ENCODE measurements at regions of chr9 and their contacts with region 1.

Region 1: DNA sequence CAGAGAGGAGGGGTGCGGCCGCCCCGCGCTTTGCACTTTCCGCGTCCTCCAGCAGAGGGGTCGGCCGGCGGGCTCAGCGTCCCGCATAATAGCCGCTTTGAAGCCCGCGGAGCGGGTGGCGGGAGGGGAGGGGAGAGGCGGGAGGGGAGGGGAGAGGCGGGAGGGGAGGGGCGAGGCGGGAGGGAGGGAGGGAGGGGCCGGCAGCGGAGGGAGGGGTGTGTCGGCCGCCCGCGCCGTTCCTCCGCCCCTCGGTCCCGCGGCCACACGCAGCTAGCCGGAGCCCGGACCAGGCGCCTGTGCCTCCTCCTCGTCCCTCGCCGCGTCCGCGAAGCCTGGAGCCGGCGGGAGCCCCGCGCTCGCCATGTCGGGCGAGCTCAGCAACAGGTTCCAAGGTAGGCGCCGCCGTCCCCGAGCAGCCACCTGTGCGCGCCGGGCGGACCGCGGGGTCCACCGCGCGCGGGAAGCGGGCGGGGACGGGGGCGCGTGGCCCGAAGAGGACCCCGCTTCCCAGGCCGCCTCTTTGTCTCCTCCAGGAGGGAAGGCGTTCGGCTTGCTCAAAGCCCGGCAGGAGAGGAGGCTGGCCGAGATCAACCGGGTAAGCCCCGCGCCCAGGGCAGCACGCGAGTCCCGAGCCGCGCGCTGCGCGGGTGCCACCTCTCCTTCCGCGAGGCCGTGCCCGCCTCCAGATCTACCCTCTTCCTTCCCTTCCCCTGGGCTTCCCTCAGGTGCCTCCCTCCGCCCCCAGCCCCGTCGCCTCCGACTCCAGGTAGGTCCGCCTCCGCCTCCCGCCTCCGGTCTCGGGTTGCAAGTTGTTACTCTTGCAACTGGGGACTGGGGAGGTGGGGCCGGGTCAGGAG is at the start of gene AIF1L:
- DNase-seq: peak; percentile 68 to 91
- H3K4me3 ChIP-seq: peak within 1 kb of the TSS; percentile 85 to 92 (median 88)
- H3K27ac ChIP-seq: peak within 1 kb of the TSS; percentile 86
- H3K4me1 ChIP-seq: peaks cover 0 to 38% (median 29%) of the 10 kb centered on the region in 4 experiments; a peak in 6 of 7 replicates
- H3K27me3 ChIP-seq: no peaks in the 10 kb centered on the region; a peak in 1 of 7 replicates
- CTCF ChIP-seq: peak in 2 of 3 experiments; percentile 31 to 41; a peak in 3 of 4 replicates
- EP300 ChIP-seq: no peak
- POLR2A ChIP-seq: peak in 1 of 2 experiments; percentile 89; a peak in 2 of 3 replicates
- RAD21 ChIP-seq: peak; percentile 17 to 41; a peak in 3 of 4 replicates
- total RNA-seq, gene AIF1L: 149 and 153 TPM in 2 replicates

Region 2: GRCh38 chr9:130927338-130927737 is 169.2 kb before region 1 on chr9:
- CTCF ChIA-PET with region 1: no interaction called
- POLR2A ChIA-PET with region 1: no interaction called
- DNase-seq: no peak
- H3K4me3 ChIP-seq: no peak overlapping the region
- H3K27ac ChIP-seq: no peak overlapping the region
- H3K4me1 ChIP-seq: peaks cover 0 to 13% (median 3%) of the 10 kb centered on the region in 4 experiments; a peak in 6 of 7 replicates
- H3K27me3 ChIP-seq: no peaks in the 10 kb centered on the region
- CTCF ChIP-seq: no peak
- EP300 ChIP-seq: no peak
- POLR2A ChIP-seq: no peak
- RAD21 ChIP-seq: no peak

Region 3: GRCh38 chr9:130940693-130941576 is 155.6 kb before region 1 on chr9:
- CTCF ChIA-PET with region 1: no interaction called
- POLR2A ChIA-PET with region 1: no interaction called
- DNase-seq: peak; percentile 85 to 99
- H3K4me3 ChIP-seq: peak overlapping the region in 1 of 4 experiments; percentile 96; a peak in 3 of 8 replicates
- H3K27ac ChIP-seq: no peak overlapping the region
- H3K4me1 ChIP-seq: peaks cover 8 to 34% (median 15%) of the 10 kb centered on the region in 4 experiments
- H3K27me3 ChIP-seq: peaks cover 18 to 44% (median 32%) of the 10 kb centered on the region in 4 experiments
- CTCF ChIP-seq: peak in 2 of 3 experiments; percentile 90 to 97; a peak in 3 of 4 replicates
- EP300 ChIP-seq: no peak
- POLR2A ChIP-seq: no peak
- RAD21 ChIP-seq: peak; percentile 87 to 88

Region 4: DNA sequence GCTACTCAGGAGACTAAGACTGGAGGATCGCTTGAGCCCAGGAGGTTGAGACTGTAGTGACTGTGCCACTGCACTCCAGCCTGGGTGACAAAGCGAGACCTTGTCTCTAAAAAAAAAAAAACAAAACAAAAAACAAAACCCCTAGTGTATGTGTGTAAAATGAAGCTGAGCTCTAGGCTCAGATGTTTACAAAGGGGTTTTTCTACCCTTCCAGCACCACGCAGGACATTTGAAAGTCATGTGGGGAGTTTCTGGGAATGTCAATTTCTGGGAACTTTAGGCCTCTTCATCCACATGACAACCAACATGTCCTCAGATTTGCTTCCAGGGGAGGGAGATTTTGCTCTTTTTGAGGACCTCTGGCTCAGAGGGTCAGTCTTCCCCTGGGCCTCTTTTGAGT is 42.6 kb before region 1 on chr9:
- CTCF ChIA-PET with region 1: interaction called, 14 read pairs
- POLR2A ChIA-PET with region 1: interaction called, 4 read pairs
- DNase-seq: no peak
- H3K4me3 ChIP-seq: no peak overlapping the region
- H3K27ac ChIP-seq: no peak overlapping the region
- H3K4me1 ChIP-seq: no peaks in the 10 kb centered on the region
- H3K27me3 ChIP-seq: no peaks in the 10 kb centered on the region
- CTCF ChIP-seq: no peak
- EP300 ChIP-seq: no peak
- POLR2A ChIP-seq: no peak
- RAD21 ChIP-seq: no peak

Region 5: GRCh38 chr9:131076347-131077195 is 19.9 kb before region 1 on chr9:
- CTCF ChIA-PET with region 1: interaction called, 24 read pairs
- POLR2A ChIA-PET with region 1: interaction called, 16 read pairs
- DNase-seq: no peak
- H3K4me3 ChIP-seq: no peak overlapping the region
- H3K27ac ChIP-seq: no peak overlapping the region
- H3K4me1 ChIP-seq: no peaks in the 10 kb centered on the region; a peak in 1 of 7 replicates
- H3K27me3 ChIP-seq: no peaks in the 10 kb centered on the region
- CTCF ChIP-seq: no peak
- EP300 ChIP-seq: no peak
- POLR2A ChIP-seq: no peak
- RAD21 ChIP-seq: no peak

Region 6: DNA sequence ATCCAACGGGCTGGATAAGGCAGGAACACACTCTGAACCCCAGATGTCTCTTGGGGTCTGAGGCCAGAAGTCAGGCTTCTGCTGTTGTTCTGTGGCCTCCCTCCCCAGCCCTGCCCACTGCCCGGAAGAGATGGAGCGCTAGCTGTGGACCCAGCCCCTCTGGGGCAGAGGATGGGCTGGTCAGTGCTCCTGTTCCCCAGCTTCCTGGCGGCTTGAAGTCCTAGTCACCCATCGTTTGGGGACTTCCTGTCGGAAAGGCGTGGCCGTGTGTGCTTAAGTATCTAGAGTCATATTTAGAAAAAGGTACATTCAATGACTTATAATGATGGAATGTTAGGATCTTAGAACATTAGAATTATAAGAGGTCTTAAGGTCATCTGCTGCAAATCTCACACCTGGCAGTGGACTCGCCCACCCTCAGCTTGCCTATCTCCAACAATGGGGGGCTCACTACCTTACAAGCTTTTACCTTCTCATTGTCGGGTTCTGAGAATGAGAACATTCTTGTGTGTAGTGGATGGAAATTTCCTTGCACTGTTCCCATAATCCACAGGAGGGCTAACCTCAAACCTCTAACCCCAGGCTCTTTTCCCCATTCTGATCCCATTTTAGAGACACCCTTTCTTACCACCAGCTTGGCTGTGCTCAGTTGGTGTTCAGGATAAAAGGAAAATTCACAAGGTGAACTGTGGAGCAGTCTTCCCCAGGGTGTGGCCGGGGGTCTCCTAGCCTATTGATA is 13.6 kb before region 1 on chr9:
- CTCF ChIA-PET with region 1: interaction called, 24 read pairs
- POLR2A ChIA-PET with region 1: interaction called, 16 read pairs
- DNase-seq: no peak
- H3K4me3 ChIP-seq: no peak overlapping the region
- H3K27ac ChIP-seq: no peak overlapping the region
- H3K4me1 ChIP-seq: no peaks in the 10 kb centered on the region; a peak in 1 of 7 replicates
- H3K27me3 ChIP-seq: no peaks in the 10 kb centered on the region; a peak in 1 of 7 replicates
- CTCF ChIP-seq: no peak
- EP300 ChIP-seq: no peak
- POLR2A ChIP-seq: no peak
- RAD21 ChIP-seq: no peak

Region 7: GRCh38 chr9:131111854-131112311 is 15.4 kb after region 1 on chr9:
- CTCF ChIA-PET with region 1: interaction called, 47 read pairs
- POLR2A ChIA-PET with region 1: interaction called, 751 read pairs
- DNase-seq: no peak
- H3K4me3 ChIP-seq: no peak overlapping the region
- H3K27ac ChIP-seq: peak overlapping the region; percentile 82
- H3K4me1 ChIP-seq: peaks cover 3 to 16% (median 11%) of the 10 kb centered on the region in 4 experiments
- H3K27me3 ChIP-seq: no peaks in the 10 kb centered on the region
- CTCF ChIP-seq: peak in 2 of 3 experiments; percentile 14 to 39; a peak in 2 of 4 replicates
- EP300 ChIP-seq: no peak
- POLR2A ChIP-seq: no peak
- RAD21 ChIP-seq: peak; percentile 7 to 28; a peak in 1 of 4 replicates

Region 8: GRCh38 chr9:131125128-131126058 is 28.9 kb after region 1 on chr9 and contains the start of gene NUP214:
- CTCF ChIA-PET with region 1: interaction called, 4 read pairs
- POLR2A ChIA-PET with region 1: interaction called, 751 read pairs
- DNase-seq: peak; percentile 89 to 100
- H3K4me3 ChIP-seq: peak within 1 kb of the TSS; percentile 93 to 99 (median 96)
- H3K27ac ChIP-seq: peak within 1 kb of the TSS; percentile 90
- H3K4me1 ChIP-seq: peaks cover 0 to 3% (median 0%) of the 10 kb centered on the region in 4 experiments; a peak in 1 of 7 replicates
- H3K27me3 ChIP-seq: no peaks in the 10 kb centered on the region
- CTCF ChIP-seq: no peak
- EP300 ChIP-seq: peak in 1 of 2 experiments; percentile 13; a peak in 1 of 3 replicates
- POLR2A ChIP-seq: peak; percentile 94 to 96
- RAD21 ChIP-seq: no peak; a peak in 1 of 4 replicates
- total RNA-seq, gene NUP214: 39.0 and 50.2 TPM in 2 replicates

Region 9: GRCh38 chr9:131144201-131144600 is 47.7 kb after region 1 on chr9:
- CTCF ChIA-PET with region 1: no interaction called
- POLR2A ChIA-PET with region 1: no interaction called
- DNase-seq: no peak
- H3K4me3 ChIP-seq: no peak overlapping the region
- H3K27ac ChIP-seq: no peak overlapping the region
- H3K4me1 ChIP-seq: no peaks in the 10 kb centered on the region
- H3K27me3 ChIP-seq: no peaks in the 10 kb centered on the region
- CTCF ChIP-seq: no peak
- EP300 ChIP-seq: no peak
- POLR2A ChIP-seq: no peak
- RAD21 ChIP-seq: no peak

Measured in H1 (cell line).